ENCODE measurements at regions of chr12 and their contacts with region 1.

Region 1: DNA sequence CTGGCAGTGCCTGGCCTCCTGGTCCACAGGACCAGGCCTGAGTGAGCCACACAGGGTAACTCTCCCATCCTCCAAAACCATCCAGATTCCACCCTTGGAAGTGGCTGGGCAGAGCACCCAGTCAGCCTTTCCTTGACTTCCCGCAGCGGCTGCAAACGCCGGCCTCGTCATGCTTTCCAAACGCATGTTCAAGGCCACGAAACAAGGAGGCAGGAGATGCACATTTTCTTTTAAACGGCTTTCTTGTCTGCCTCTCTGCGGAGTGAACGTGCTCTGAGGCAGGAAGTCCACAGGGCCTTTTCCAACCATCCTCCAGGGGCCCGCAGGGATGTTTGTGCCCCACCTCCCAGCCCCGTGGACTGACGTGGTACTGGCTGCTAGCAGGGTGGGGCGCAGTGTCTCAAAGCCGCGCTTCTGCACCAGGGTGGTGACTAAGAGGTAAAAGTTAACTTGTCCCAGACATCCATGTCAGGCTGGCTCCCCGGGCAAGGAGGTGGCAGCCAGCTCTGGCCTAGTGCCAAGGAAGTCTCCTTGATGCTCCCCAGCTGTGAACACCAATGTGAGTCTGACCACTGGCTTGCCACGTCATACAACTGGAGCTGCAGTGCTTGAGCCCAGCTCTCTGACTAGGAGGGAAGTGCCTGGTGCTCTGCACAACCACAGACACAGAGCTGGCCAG is 45.0 kb downstream of the KCNA5 start:
- DNase-seq: no peak
- CTCF ChIP-seq: no peak

Region 2: GRCh38 chr12:5022465-5023061 is 66.2 kb before region 1 on chr12:
- in situ Hi-C with region 1: loop called (anchors 5 kb)
- DNase-seq: peak; percentile 85
- CTCF ChIP-seq: peak; percentile 90